ENCODE measurements at regions of chr1 and their contacts with region 1.

Region 1: GRCh38 chr1:248837794-248838356 is at the start of gene ZNF672:
- DNase-seq: peak; percentile 97
- ATAC-seq: peak; percentile 90
- H3K4me3 ChIP-seq: peak within 1 kb of the TSS; percentile 89
- H3K27ac ChIP-seq: peak within 1 kb of the TSS; percentile 97
- H3K4me1 ChIP-seq: peaks cover 10% of the 10 kb centered on the region
- H3K27me3 ChIP-seq: no peaks in the 10 kb centered on the region
- CTCF ChIP-seq: no peak
- POLR2A ChIP-seq: no peak
- RAD21 ChIP-seq: no peak
- total RNA-seq, gene ZNF672: 6.6 and 6.9 TPM in 2 replicates

Region 2: GRCh38 chr1:248820041-248820585 is 17.8 kb before region 1 on chr1:
- CTCF ChIA-PET with region 1: interaction called, 4 read pairs
- POLR2A ChIA-PET with region 1: interaction called, 13 read pairs
- dilution Hi-C with region 1: no loop called
- in situ Hi-C with region 1: no loop called
- intact Hi-C with region 1: no loop called
- DNase-seq: no peak
- ATAC-seq: no peak
- H3K4me3 ChIP-seq: no peak overlapping the region
- H3K27ac ChIP-seq: no peak overlapping the region
- H3K4me1 ChIP-seq: peaks cover 24% of the 10 kb centered on the region
- H3K27me3 ChIP-seq: no peaks in the 10 kb centered on the region
- CTCF ChIP-seq: no peak
- POLR2A ChIP-seq: no peak
- RAD21 ChIP-seq: no peak

Region 3: DNA sequence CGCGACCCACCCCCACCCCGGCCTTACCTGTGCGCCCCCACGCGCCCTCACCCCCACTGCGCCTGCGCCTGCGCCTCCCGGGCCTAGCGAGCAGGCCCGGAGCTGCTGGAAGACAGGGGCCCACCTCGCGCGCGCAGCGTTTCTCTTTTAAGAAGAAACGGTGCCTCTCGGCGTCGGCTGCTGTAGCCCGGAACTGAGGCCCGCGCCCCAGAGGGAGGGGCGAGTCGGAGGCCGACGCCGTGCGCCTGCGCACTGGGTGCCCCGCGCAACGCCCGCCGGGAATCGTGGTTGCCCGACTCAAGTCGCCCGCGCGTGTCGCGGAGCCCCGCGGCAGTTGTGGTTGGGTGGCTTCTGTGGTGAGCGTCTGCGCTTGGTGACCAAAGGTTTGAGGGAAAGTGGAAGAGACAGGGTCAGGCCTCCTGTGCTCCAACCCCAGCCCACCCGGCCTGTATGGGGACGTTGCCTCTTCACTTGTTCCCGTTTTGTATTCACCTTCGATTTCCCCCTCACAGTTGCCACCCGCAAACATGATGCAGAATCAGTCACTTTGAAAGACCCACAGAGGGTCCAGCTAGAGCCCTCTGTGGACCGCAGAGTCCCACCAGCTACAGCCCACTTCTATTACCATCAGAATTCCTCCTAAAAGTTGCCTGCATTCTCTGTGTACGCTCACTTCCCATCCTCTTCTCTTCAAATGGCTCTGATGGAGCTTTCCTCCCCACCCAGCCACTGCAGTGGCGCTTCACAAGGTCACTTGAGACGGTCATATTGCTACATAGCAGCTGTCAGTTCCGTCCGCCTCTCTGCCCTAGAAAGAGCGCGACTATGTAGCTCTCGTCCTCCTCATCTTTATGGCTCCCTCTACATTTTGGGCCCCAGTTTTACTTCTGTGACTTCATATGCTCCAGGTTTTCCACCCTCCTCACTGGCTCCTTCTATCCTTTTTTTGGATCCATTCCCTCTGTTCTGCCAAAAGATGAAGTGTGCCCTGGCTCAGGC is 21.3 kb after region 1 on chr1 and contains the start of gene ZNF692:
- CTCF ChIA-PET with region 1: interaction called, 4 read pairs
- POLR2A ChIA-PET with region 1: interaction called, 4 read pairs
- dilution Hi-C with region 1: no loop called
- in situ Hi-C with region 1: no loop called
- intact Hi-C with region 1: loop called (anchors 1 kb)
- DNase-seq: peak; percentile 96
- ATAC-seq: peak; percentile 86
- H3K4me3 ChIP-seq: peak within 1 kb of the TSS; percentile 66
- H3K27ac ChIP-seq: peak within 1 kb of the TSS; percentile 78
- H3K4me1 ChIP-seq: peaks cover 18% of the 10 kb centered on the region
- H3K27me3 ChIP-seq: no peaks in the 10 kb centered on the region
- CTCF ChIP-seq: no peak
- POLR2A ChIP-seq: no peak; the same call in 1 of the 2 replicates
- RAD21 ChIP-seq: no peak
- total RNA-seq, gene ZNF692: 6.9 and 7.3 TPM in 2 replicates